ENCODE measurements at regions of chr2 and their contacts with region 1.

Region 1: DNA sequence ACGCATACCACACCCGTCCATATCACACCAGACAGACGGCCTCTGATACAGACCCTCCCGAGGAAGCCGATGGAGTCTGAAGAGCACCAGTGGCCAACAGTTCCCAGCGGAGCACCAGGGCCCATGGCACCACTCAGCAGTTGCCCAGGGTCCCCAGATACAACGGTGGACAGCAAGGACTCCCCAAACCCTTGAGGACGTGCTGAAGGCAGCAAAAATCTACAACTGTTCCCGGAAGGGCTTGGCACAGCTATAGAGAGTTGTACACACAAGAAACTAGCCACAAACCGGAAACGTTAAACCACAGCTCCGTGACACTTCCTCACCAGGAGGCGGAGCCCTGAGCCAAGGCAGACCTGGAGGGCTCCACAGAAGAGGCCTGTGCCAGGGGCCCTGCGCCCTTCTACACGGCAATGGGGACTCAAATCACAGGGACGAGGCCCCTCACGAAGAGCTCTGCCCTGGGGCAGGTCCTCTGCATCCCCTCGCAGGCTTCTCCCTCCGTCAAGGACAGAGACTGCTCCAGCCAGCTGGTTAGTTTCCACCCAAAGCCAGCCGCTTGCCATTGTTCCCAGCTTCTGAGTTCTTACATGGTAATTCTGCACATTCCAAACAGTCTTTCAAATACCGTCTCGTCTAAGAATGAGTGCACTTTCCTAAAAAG is 133.4 kb downstream of the HDAC4 start:
- DNase-seq: peak; percentile 96
- H3K4me3 Mint-ChIP-seq: peak overlapping the region; percentile 98
- H3K27ac Mint-ChIP-seq: peak overlapping the region; percentile 98
- H3K4me1 Mint-ChIP-seq: peaks cover 90% of the 10 kb centered on the region
- H3K27me3 Mint-ChIP-seq: no peaks in the 10 kb centered on the region

Region 2: GRCh38 chr2:239143858-239144718 is 123.3 kb before region 1 on chr2:
- CTCF ChIA-PET with region 1: interaction called, 24 read pairs
- DNase-seq: peak; percentile 30
- H3K4me3 Mint-ChIP-seq: no peak overlapping the region
- H3K27ac Mint-ChIP-seq: no peak overlapping the region
- H3K4me1 Mint-ChIP-seq: no peaks in the 10 kb centered on the region
- H3K27me3 Mint-ChIP-seq: no peaks in the 10 kb centered on the region

Region 3: GRCh38 chr2:239298116-239298804 is 30.8 kb after region 1 on chr2:
- CTCF ChIA-PET with region 1: interaction called, 13 read pairs
- DNase-seq: peak; percentile 88
- H3K4me3 Mint-ChIP-seq: peak overlapping the region; percentile 84
- H3K27ac Mint-ChIP-seq: peak overlapping the region; percentile 96
- H3K4me1 Mint-ChIP-seq: peaks cover 77% of the 10 kb centered on the region
- H3K27me3 Mint-ChIP-seq: peaks cover 12% of the 10 kb centered on the region

Region 4: DNA sequence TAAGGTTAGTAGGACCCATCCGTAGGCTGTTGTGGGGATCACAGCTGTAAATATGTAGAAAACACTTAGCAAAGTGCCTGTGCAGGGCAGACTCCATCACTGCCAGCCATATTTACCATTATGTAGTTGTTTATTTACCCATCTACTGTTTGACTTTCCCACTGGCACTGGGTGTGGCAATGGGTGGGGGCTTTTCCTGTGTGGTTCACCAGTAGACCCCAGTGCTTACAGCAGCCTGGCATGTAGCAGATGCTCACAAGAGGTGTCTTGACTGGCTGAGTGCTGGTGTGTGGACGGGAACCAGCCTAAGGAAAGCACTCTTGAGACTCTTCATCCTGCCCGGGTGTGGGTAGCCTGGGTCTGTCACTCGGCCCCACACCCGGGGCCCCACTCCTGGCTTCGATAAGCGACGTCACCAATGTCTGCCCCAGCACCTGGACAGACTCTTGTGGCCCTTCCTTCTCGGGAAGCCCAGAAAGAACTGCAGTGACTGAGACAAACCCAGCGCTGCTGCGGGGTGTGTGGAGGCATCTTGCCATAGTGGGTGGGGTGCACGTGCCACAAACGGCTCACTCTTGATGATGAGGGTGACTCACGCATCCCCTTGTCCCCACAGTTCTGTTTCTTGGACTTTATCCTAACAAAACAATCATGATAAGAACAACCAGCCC is 55.1 kb after region 1 on chr2:
- CTCF ChIA-PET with region 1: interaction called, 12 read pairs
- DNase-seq: peak; percentile 54
- H3K4me3 Mint-ChIP-seq: no peak overlapping the region
- H3K27ac Mint-ChIP-seq: peak overlapping the region; percentile 100
- H3K4me1 Mint-ChIP-seq: peaks cover 96% of the 10 kb centered on the region
- H3K27me3 Mint-ChIP-seq: no peaks in the 10 kb centered on the region

Region 5: GRCh38 chr2:239396881-239397681 is 129.7 kb after region 1 on chr2:
- CTCF ChIA-PET with region 1: interaction called, 15 read pairs
- DNase-seq: peak; percentile 72
- H3K4me3 Mint-ChIP-seq: no peak overlapping the region
- H3K27ac Mint-ChIP-seq: peak overlapping the region; percentile 61
- H3K4me1 Mint-ChIP-seq: peaks cover 50% of the 10 kb centered on the region
- H3K27me3 Mint-ChIP-seq: peaks cover 3% of the 10 kb centered on the region

Region 6: DNA sequence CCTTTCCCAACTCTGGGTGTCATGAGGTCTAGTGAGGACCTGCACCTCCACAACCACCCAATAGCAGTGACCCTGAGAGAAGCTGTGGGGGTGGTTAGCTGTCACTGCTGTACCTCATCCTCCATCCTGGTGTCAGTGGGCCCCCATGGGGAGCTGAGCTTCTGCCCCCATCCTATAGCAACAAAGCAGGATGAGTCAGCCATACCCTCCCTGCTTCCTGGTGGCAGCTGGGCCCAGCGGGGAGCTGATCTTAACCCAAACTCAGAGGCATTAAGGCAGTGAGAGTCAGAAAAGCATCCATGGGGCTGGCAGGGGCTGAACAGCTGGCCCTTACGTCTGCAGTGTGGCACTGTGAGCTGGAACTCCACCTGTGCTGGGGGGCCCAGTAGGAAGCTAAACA is 381.2 kb after region 1 on chr2:
- CTCF ChIA-PET with region 1: no interaction called
- DNase-seq: no peak
- H3K4me3 Mint-ChIP-seq: no peak overlapping the region
- H3K27ac Mint-ChIP-seq: no peak overlapping the region
- H3K4me1 Mint-ChIP-seq: no peaks in the 10 kb centered on the region
- H3K27me3 Mint-ChIP-seq: peaks cover 25% of the 10 kb centered on the region

Measured in activated naive CD4-positive, alpha-beta T cell treated with anti-CD3 and anti-CD28 coated beads, Interleukin-2, amount 10 ng/mL, durations not matched to agents 7 days and 5 days (primary cell).